IMR-90 (cell line): ENCODE measurements at regions of chr18 and their contacts with region 1.

Region 1: GRCh38 chr18:2448565-2449151 is 122.6 kb downstream of the METTL4 start:
- DNase-seq: no peak
- ATAC-seq: no peak
- H3K4me3 ChIP-seq: no peak overlapping the region
- H3K27ac ChIP-seq: no peak overlapping the region
- H3K4me1 ChIP-seq: no peaks in the 10 kb centered on the region
- H3K27me3 ChIP-seq: no peaks in the 10 kb centered on the region
- CTCF ChIP-seq: no peak
- POLR2A ChIP-seq: no peak
- RAD21 ChIP-seq: no peak

Region 2: GRCh38 chr18:2471523-2471922 is 22.9 kb after region 1 on chr18:
- CTCF ChIA-PET with region 1: no interaction called
- POLR2A ChIA-PET with region 1: no interaction called
- dilution Hi-C with region 1: no loop called
- in situ Hi-C with region 1: no loop called
- intact Hi-C with region 1: loop called (anchors 2 kb)
- DNase-seq: no peak
- ATAC-seq: no peak
- H3K4me3 ChIP-seq: no peak overlapping the region
- H3K27ac ChIP-seq: no peak overlapping the region
- H3K4me1 ChIP-seq: no peaks in the 10 kb centered on the region
- H3K27me3 ChIP-seq: peaks cover 4% of the 10 kb centered on the region
- CTCF ChIP-seq: no peak
- POLR2A ChIP-seq: no peak
- RAD21 ChIP-seq: no peak